ENCODE measurements at regions of chr16 and their contacts with region 1.

Region 1: GRCh38 chr16:74695450-74696422 is 4.9 kb downstream of the MLKL start:
- DNase-seq: peak; percentile 79
- ATAC-seq: peak; percentile 74
- H3K4me3 Mint-ChIP-seq: peak overlapping the region; percentile 74
- H3K27ac Mint-ChIP-seq: peak overlapping the region; percentile 60
- H3K4me1 Mint-ChIP-seq: peaks cover 46% of the 10 kb centered on the region
- H3K27me3 Mint-ChIP-seq: no peaks in the 10 kb centered on the region

Region 2: GRCh38 chr16:74709441-74709877 is 13.7 kb after region 1 on chr16:
- CTCF ChIA-PET with region 1: interaction called, 5 read pairs
- POLR2A ChIA-PET with region 1: interaction called, 10 read pairs
- DNase-seq: peak; percentile 87
- ATAC-seq: peak; percentile 96
- H3K4me3 Mint-ChIP-seq: no peak overlapping the region
- H3K27ac Mint-ChIP-seq: no peak overlapping the region
- H3K4me1 Mint-ChIP-seq: peaks cover 7% of the 10 kb centered on the region
- H3K27me3 Mint-ChIP-seq: peaks cover 6% of the 10 kb centered on the region

Measured in activated CD8-positive, alpha-beta T cell treated with anti-CD3 and anti-CD28 coated beads, Interleukin-2, amount 10 ng/mL, durations not matched to agents 7 days and 5 days (primary cell).